Cardiac septum (tissue), 1 donor: ENCODE measurements at regions of chr1 and their contacts with region 1.

Region 1: DNA sequence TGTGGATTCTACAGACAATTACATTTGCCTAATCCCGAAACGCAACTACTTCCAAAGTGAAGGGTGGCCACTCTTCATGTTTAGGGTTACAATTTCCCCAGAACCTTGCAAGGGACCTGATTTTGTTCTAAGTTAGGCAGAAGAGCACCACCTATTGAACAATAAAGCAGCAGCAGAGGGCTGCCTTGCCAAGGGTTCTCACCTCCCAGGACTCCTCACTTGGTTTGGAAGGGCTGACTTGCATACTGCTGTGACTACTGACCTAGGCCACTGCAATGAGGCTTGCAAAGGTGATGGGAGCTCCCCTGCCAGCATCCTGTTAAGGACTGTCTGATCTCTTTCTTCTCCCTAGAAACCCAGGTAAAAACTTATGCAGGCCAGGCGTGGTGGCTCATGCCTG is 14.2 kb downstream of the MTOR start:
- DNase-seq: no peak

Region 2: GRCh38 chr1:11037740-11038182 is 210.4 kb before region 1 on chr1:
- intact Hi-C with region 1: loop called (anchors 10 kb)
- DNase-seq: peak; percentile 93

Region 3: DNA sequence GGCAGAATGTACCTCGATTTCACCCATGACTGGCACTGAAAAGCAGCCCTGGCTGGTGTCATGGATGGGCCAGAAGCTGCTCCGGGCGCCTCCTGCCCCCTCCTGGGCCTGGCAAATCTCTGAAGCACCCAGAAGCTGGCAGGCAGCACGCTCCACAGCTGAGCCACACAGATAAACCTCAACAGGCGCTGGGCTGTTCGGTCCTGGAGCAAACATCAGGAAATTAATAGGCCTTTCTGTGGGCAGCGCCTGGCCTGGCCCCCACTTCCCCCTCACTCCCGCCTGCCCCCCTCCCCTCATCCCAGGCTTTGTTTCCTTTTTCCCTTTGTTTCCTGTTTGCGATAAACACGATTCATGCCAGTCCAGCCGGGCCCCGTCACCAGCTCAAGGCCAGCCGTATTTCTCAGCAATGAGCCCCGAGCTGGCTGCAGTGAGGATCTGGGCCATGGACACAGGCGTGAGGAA is 210.7 kb after region 1 on chr1:
- intact Hi-C with region 1: no loop called
- DNase-seq: no peak